Activated naive CD4-positive, alpha-beta T cell treated with anti-CD3 and anti-CD28 coated beads, Interleukin-2, amount 10 ng/mL, durations not matched to agents 7 days and 5 days (primary cell): ENCODE measurements at regions of chr2 and their contacts with region 1.

Region 1: GRCh38 chr2:10083692-10084181 is 3.5 kb upstream of the CYS1 start:
- DNase-seq: no peak
- H3K4me3 Mint-ChIP-seq: no peak overlapping the region
- H3K27ac Mint-ChIP-seq: no peak overlapping the region
- H3K4me1 Mint-ChIP-seq: peaks cover 14% of the 10 kb centered on the region
- H3K27me3 Mint-ChIP-seq: peaks cover 91% of the 10 kb centered on the region

Region 2: GRCh38 chr2:10097352-10098148 is 13.8 kb after region 1 on chr2:
- CTCF ChIA-PET with region 1: interaction called, 11 read pairs
- DNase-seq: peak; percentile 51
- H3K4me3 Mint-ChIP-seq: no peak overlapping the region
- H3K27ac Mint-ChIP-seq: no peak overlapping the region
- H3K4me1 Mint-ChIP-seq: peaks cover 6% of the 10 kb centered on the region
- H3K27me3 Mint-ChIP-seq: peaks cover 78% of the 10 kb centered on the region

Region 3: DNA sequence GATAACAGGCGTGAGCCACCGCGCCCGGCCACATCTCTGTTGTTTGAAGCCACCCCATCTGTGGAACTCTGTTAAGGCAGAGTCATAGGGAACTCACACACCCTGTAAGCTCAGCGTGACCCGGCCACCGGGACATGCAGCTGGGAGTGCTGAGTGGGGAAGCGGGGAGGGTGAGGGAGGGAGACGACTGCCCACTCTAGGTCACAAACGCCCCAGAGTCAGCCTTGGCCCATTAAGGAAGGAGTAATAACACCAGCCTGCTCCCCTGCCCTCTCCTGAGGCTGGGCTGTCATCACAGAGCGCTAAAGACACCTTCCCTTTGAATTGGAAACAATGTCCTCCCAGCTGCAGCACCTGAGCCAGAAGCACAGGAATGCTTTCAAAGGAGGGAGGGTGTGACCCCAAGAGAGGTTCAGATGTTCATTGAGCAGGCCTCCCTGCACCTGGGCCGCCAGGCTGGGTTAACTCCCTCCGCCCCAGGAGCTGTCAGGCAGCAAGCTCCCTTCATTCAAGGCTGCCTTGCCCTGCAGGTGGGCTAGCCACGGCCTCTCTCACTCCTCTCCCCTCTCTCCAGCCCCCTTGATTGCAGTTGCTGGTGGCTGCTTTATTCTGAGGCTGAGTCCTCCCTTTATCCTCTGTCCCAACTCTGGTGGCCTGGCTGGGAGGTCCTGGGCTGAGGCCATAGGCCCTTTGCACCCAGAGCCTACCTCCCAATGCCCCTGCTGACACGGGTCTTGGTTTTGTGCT is 141.7 kb after region 1 on chr2:
- CTCF ChIA-PET with region 1: no interaction called
- DNase-seq: no peak
- H3K4me3 Mint-ChIP-seq: no peak overlapping the region
- H3K27ac Mint-ChIP-seq: no peak overlapping the region
- H3K4me1 Mint-ChIP-seq: no peaks in the 10 kb centered on the region
- H3K27me3 Mint-ChIP-seq: peaks cover 43% of the 10 kb centered on the region